Heart right ventricle (tissue), 16 donors: ENCODE measurements at regions of chr4 and their contacts with region 1.

Region 1: GRCh38 chr4:42519803-42520417 is 122.6 kb downstream of the SHISA3 start:
- DNase-seq: peak in 1 of 2 donors; percentile 51
- ATAC-seq: peak in 5 of 8 donors; percentile 44 to 64 (median 61)
- H3K4me3 ChIP-seq: no peak overlapping the region
- H3K27ac ChIP-seq: no peak overlapping the region
- H3K4me1 ChIP-seq: peaks cover 0 to 26% (median 10%) of the 10 kb centered on the region in 9 donors
- H3K27me3 ChIP-seq: no peaks in the 10 kb centered on the region
- CTCF ChIP-seq: peak; percentile 42 to 83 (median 67)

Region 2: GRCh38 chr4:42359711-42360110 is 160.2 kb before region 1 on chr4:
- intact Hi-C with region 1: loop called in 2 of 10 experiments (anchors 10 kb)
- DNase-seq: no peak
- ATAC-seq: no peak
- H3K4me3 ChIP-seq: peak overlapping the region in 6 of 10 donors; percentile 7 to 32 (median 23)
- H3K27ac ChIP-seq: peak overlapping the region in 2 of 10 donors; percentile 15 to 34
- H3K4me1 ChIP-seq: peaks cover 0 to 5% (median 0%) of the 10 kb centered on the region in 9 donors
- H3K27me3 ChIP-seq: peaks cover 0 to 16% (median 0%) of the 10 kb centered on the region in 7 donors
- CTCF ChIP-seq: no peak

Region 3: GRCh38 chr4:42371306-42372252 is 148.3 kb before region 1 on chr4:
- intact Hi-C with region 1: loop called (anchors 1 to 10 kb)
- DNase-seq: peak in 1 of 2 donors; percentile 30
- ATAC-seq: peak in 6 of 8 donors; percentile 38 to 58 (median 50)
- H3K4me3 ChIP-seq: no peak overlapping the region
- H3K27ac ChIP-seq: no peak overlapping the region
- H3K4me1 ChIP-seq: no peaks in the 10 kb centered on the region
- H3K27me3 ChIP-seq: no peaks in the 10 kb centered on the region
- CTCF ChIP-seq: peak; percentile 27 to 77 (median 63)

Region 4: DNA sequence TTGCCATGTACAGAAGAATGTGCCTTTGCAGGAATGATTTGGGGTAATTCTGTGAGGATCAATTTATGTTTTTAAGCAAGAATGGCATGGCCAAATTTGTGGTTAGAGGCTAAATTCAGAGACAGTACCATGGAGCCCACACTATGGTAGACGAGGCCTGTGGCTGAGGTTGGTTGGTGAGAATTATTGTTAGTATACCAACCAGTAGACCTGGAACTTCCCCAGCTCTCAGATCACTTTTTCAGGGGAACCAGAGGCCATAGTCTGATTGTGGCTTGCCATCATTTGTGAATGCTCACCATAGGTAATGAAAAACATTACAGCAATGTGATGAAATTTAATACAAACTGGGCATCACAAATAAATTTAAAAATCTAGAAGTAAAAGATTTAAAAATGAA is 66.3 kb before region 1 on chr4:
- intact Hi-C with region 1: no loop called
- DNase-seq: no peak
- ATAC-seq: no peak
- H3K4me3 ChIP-seq: no peak overlapping the region
- H3K27ac ChIP-seq: no peak overlapping the region
- H3K4me1 ChIP-seq: peaks cover 0 to 2% (median 0%) of the 10 kb centered on the region in 9 donors
- H3K27me3 ChIP-seq: no peaks in the 10 kb centered on the region
- CTCF ChIP-seq: no peak